ENCODE measurements at regions of chr12 and their contacts with region 1.

Region 1: GRCh38 chr12:3103806-3104205 is 26.6 kb downstream of the TSPAN9 start:
- DNase-seq: no peak
- H3K4me3 ChIP-seq: no peak overlapping the region
- H3K27ac ChIP-seq: peak overlapping the region; percentile 31
- H3K4me1 ChIP-seq: peaks cover 44% of the 10 kb centered on the region
- H3K27me3 ChIP-seq: no peaks in the 10 kb centered on the region
- CTCF ChIP-seq: no peak

Region 2: DNA sequence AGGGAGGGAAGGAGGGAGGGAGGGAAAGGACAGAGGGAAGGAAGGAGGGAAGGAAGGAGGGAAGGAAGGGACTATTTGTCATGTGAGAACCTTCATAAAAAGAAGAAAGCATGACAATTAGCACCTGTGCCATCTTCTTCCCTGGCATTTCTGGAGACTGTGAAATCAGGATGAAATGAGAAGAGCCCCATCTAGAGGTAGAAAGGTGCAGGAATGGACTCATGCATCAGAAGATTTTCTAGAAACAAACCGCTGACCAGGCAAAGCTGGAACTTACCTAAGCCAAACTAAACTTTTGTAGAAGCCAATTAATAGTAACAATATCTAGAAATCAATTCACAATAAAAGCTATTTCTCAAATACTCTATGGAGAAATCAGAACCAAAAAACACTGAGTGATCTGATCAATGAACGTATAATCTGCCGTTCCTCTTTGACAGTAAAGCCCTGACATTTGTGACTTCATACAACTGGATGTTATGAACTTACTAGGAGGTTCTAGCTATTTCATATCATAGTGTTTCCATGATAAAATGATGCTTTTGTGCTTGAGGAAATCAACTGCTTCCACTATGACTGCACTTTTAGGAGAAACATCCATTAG is 673.5 kb after region 1 on chr12:
- CTCF ChIA-PET with region 1: interaction called, 11 read pairs
- POLR2A ChIA-PET with region 1: no interaction called
- intact Hi-C with region 1: no loop called
- DNase-seq: peak; percentile 47
- H3K4me3 ChIP-seq: no peak overlapping the region
- H3K27ac ChIP-seq: no peak overlapping the region
- H3K4me1 ChIP-seq: no peaks in the 10 kb centered on the region
- H3K27me3 ChIP-seq: peaks cover 13% of the 10 kb centered on the region
- CTCF ChIP-seq: peak; percentile 74